SK-N-SH (cell line): ENCODE measurements at regions of chr19 and their contacts with region 1.

Region 1: DNA sequence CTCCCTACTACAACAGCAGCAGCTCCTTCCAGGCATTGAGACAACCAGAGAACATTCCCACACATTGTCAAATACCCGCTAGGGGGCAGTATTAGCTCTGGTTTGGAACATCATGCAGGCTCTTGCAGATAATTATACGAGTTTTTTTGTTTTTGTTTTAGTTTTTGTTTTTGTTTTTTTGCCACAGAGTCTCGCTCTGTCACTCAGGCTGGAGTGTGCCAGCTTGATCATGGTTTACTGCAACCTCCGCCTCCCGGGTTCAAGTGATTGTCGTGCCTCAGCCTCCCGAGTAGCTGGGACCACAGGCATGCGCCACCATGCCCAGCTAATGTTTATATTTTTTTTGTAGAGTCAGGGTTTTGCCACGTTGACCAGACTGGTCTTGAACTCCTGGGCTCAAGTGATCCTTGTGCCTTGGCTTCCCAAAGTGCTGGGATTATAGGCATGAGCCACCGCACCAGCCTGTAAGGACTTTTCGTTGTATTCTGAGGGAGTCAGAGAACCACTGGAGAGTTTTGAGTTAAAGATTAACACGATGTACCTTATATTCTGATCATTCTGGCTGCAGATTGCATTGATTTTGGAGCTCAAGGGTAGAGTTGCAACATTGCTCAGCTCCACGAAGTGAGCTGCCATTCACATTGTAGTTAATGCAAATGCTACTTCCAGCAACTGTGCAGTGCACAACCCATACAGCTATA is 41.7 kb upstream of the CEACAM20 start:
- DNase-seq: peak; percentile 61
- H3K4me3 ChIP-seq: peak overlapping the region in 1 of 2 experiments; percentile 34; a peak in 1 of 4 replicates
- H3K27ac ChIP-seq: no peak overlapping the region
- H3K4me1 ChIP-seq: no peaks in the 10 kb centered on the region
- H3K27me3 ChIP-seq: peaks cover 32% of the 10 kb centered on the region; the same call in 1 of the 2 replicates
- CTCF ChIP-seq: peak; percentile 88
- EP300 ChIP-seq: no peak
- RAD21 ChIP-seq: peak; percentile 81

Region 2: GRCh38 chr19:44539236-44539826 is 31.8 kb before region 1 on chr19:
- CTCF ChIA-PET with region 1: interaction called, 20 read pairs
- POLR2A ChIA-PET with region 1: no interaction called
- DNase-seq: no peak
- H3K4me3 ChIP-seq: no peak overlapping the region
- H3K27ac ChIP-seq: no peak overlapping the region
- H3K4me1 ChIP-seq: no peaks in the 10 kb centered on the region
- H3K27me3 ChIP-seq: peaks cover 16% of the 10 kb centered on the region; the same call in 1 of the 2 replicates
- CTCF ChIP-seq: no peak
- EP300 ChIP-seq: no peak
- RAD21 ChIP-seq: no peak

Region 3: GRCh38 chr19:44582581-44583265 is 11.6 kb after region 1 on chr19:
- CTCF ChIA-PET with region 1: interaction called, 63 read pairs
- POLR2A ChIA-PET with region 1: no interaction called
- DNase-seq: peak; percentile 46
- H3K4me3 ChIP-seq: no peak overlapping the region
- H3K27ac ChIP-seq: no peak overlapping the region
- H3K4me1 ChIP-seq: peaks cover 0 to 14% of the 10 kb centered on the region in 2 experiments; a peak in 1 of 4 replicates
- H3K27me3 ChIP-seq: no peaks in the 10 kb centered on the region
- CTCF ChIP-seq: peak; percentile 60
- EP300 ChIP-seq: no peak
- RAD21 ChIP-seq: peak; percentile 45

Region 4: GRCh38 chr19:44611812-44612295 is 40.7 kb after region 1 on chr19:
- CTCF ChIA-PET with region 1: interaction called, 10 read pairs
- POLR2A ChIA-PET with region 1: no interaction called
- DNase-seq: no peak
- H3K4me3 ChIP-seq: no peak overlapping the region
- H3K27ac ChIP-seq: no peak overlapping the region
- H3K4me1 ChIP-seq: peaks cover 0 to 23% of the 10 kb centered on the region in 2 experiments; a peak in 1 of 4 replicates
- H3K27me3 ChIP-seq: no peaks in the 10 kb centered on the region
- CTCF ChIP-seq: no peak
- EP300 ChIP-seq: no peak
- RAD21 ChIP-seq: no peak

Region 5: GRCh38 chr19:44653977-44654774 is 83.0 kb after region 1 on chr19:
- CTCF ChIA-PET with region 1: interaction called, 148 read pairs
- POLR2A ChIA-PET with region 1: interaction called, 3 read pairs
- DNase-seq: no peak
- H3K4me3 ChIP-seq: no peak overlapping the region
- H3K27ac ChIP-seq: no peak overlapping the region
- H3K4me1 ChIP-seq: no peaks in the 10 kb centered on the region
- H3K27me3 ChIP-seq: no peaks in the 10 kb centered on the region
- CTCF ChIP-seq: no peak; the same call in 1 of the 2 replicates
- EP300 ChIP-seq: no peak
- RAD21 ChIP-seq: 0 out of 2 replicates have a peak, but pooled peaks have one; percentile 3

Region 6: DNA sequence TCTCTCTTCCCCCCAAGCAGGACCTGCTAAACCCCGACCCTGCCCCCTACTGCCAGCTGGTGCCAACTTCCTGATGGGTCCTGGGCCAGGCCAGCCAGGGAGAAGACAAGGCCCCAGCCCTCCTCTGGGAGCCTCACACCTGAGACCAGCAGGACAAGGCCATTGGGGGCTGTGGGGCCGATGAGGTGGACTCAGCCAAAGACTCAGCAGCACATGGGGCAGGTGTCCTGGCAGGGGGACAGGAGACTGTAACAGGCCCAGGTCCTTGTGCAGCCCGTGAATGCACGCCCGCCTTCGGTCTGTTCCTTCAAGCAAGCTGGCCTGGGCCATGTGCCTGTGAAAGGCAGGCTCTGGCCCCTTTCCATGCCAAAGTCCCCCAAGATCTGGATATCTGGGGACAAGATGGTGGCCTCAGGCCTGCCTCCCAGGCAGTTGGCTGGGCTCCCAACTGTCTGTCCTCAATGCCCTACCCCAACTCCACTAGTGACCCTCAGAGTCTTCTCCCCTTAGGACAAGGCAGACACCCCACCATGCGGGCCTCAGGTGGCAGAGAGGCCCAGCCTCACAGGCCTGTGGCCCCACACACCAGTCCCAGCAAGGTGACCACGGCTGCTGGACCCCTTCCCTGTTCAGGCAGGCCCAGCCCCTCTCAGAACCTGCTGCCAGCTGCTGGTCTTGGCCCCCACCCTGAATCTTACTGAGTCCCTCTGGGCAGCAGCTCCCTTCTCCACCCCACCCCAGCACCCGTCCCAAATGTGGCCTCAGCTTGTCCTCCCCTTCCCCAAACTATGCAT is 112.5 kb after region 1 on chr19:
- CTCF ChIA-PET with region 1: interaction called, 26 read pairs
- POLR2A ChIA-PET with region 1: no interaction called
- DNase-seq: no peak
- H3K4me3 ChIP-seq: no peak overlapping the region
- H3K27ac ChIP-seq: peak overlapping the region in 1 of 2 experiments; percentile 92; a peak in 1 of 4 replicates
- H3K4me1 ChIP-seq: peaks cover 0 to 6% of the 10 kb centered on the region in 2 experiments; a peak in 1 of 4 replicates
- H3K27me3 ChIP-seq: no peaks in the 10 kb centered on the region
- CTCF ChIP-seq: no peak
- EP300 ChIP-seq: no peak
- RAD21 ChIP-seq: no peak

Region 7: GRCh38 chr19:44770550-44771257 is 199.6 kb after region 1 on chr19:
- CTCF ChIA-PET with region 1: interaction called, 15 read pairs
- POLR2A ChIA-PET with region 1: no interaction called
- DNase-seq: peak; percentile 94
- H3K4me3 ChIP-seq: no peak overlapping the region; a peak in 1 of 4 replicates
- H3K27ac ChIP-seq: no peak overlapping the region
- H3K4me1 ChIP-seq: peaks cover 0 to 6% of the 10 kb centered on the region in 2 experiments; a peak in 1 of 4 replicates
- H3K27me3 ChIP-seq: no peaks in the 10 kb centered on the region
- CTCF ChIP-seq: peak; percentile 87
- EP300 ChIP-seq: no peak
- RAD21 ChIP-seq: peak; percentile 94

Region 8: DNA sequence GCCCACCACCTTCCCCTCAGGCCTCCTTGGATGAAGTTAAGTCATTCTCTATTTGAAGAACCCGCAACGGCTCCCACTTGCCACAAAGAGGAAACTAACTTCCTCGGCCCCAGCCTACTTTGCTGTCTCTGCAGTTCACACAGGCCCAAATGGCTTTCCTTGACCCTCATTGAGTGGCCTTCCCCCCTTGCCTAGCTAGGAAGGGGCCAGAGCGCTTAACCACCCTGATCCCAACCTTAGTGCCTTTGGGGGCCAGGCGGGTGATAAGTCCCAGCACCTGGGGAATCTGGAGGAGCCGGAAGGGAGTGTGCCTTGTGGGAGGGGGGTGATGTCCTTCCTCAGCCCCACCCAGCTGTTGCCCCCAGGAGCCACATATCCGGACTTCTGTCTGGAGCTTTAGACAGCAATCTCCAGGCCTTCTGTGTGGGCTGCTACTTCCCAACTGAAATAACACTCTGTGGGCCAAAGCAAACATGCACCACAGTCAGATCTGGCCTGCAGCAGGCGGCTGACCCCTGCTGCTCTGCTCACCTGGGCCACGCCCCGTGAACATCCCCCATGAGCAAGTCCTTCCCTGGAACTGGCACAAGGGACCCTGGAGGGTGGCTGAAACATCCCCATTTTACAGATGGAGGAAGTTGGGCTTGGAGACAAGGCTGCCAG is 285.4 kb after region 1 on chr19:
- CTCF ChIA-PET with region 1: no interaction called
- POLR2A ChIA-PET with region 1: no interaction called
- DNase-seq: no peak
- H3K4me3 ChIP-seq: no peak overlapping the region
- H3K27ac ChIP-seq: no peak overlapping the region
- H3K4me1 ChIP-seq: no peaks in the 10 kb centered on the region
- H3K27me3 ChIP-seq: no peaks in the 10 kb centered on the region
- CTCF ChIP-seq: no peak
- EP300 ChIP-seq: no peak
- RAD21 ChIP-seq: no peak